SK-N-SH (cell line): ENCODE measurements at regions of chr11 and their contacts with region 1.

Region 1: GRCh38 chr11:62394825-62395538 is 23.9 kb upstream of the SCGB1A1 start:
- DNase-seq: peak; percentile 89
- H3K4me3 ChIP-seq: peak overlapping the region; percentile 28 to 35
- H3K27ac ChIP-seq: peak overlapping the region; percentile 6 to 93; a peak in 3 of 4 replicates
- H3K4me1 ChIP-seq: peaks cover 18 to 39% of the 10 kb centered on the region in 2 experiments; a peak in 3 of 4 replicates
- H3K27me3 ChIP-seq: no peaks in the 10 kb centered on the region
- CTCF ChIP-seq: peak; percentile 78
- EP300 ChIP-seq: peak in 1 of 2 experiments; percentile 56; a peak in 2 of 4 replicates
- RAD21 ChIP-seq: peak; percentile 93

Region 2: DNA sequence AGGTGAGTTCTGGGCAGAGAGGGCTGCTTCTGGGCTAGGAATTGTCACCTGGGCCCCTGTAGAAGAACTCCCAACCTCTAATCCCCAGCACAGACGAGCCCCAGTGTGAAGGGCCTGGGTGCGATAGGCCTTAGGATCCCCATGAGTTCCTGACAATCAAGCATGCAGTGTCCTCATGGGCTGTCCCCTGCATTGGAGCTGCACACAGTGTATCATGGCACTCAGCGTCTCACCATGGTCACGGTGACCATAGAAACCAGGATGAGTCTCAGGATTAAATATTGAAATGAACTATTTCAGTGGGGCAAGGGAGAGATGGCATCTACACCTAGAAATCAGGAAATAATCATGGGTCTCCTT is 186.2 kb before region 1 on chr11:
- CTCF ChIA-PET with region 1: no interaction called
- POLR2A ChIA-PET with region 1: no interaction called
- DNase-seq: no peak
- H3K4me3 ChIP-seq: no peak overlapping the region
- H3K27ac ChIP-seq: no peak overlapping the region
- H3K4me1 ChIP-seq: no peaks in the 10 kb centered on the region
- H3K27me3 ChIP-seq: peaks cover 18% of the 10 kb centered on the region
- CTCF ChIP-seq: no peak
- EP300 ChIP-seq: no peak
- RAD21 ChIP-seq: no peak

Region 3: DNA sequence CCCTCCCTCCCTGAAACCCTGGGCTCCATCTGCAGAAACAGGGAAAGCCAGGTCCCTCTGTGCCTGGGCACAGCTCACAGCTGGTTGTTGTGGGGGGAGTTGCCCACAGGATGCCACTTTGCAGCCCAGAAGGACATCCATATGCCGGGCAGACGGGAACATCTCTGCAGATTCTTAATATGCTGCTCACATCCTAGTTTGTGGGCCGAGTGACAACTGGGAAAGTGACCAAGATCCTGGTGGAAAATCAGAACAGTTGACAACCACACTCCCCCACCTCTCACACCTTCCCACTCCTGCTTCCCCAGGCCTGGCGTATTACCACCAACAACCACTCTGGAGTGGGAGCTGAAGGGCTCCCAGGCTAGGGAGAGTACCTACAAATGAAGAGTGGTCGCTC is 16.5 kb after region 1 on chr11:
- CTCF ChIA-PET with region 1: interaction called, 13 read pairs
- POLR2A ChIA-PET with region 1: no interaction called
- DNase-seq: no peak
- H3K4me3 ChIP-seq: no peak overlapping the region
- H3K27ac ChIP-seq: no peak overlapping the region; a peak in 1 of 4 replicates
- H3K4me1 ChIP-seq: peaks cover 0 to 22% of the 10 kb centered on the region in 2 experiments; a peak in 1 of 4 replicates
- H3K27me3 ChIP-seq: no peaks in the 10 kb centered on the region
- CTCF ChIP-seq: no peak
- EP300 ChIP-seq: no peak
- RAD21 ChIP-seq: no peak

Region 4: GRCh38 chr11:62444236-62444833 is 49.4 kb after region 1 on chr11:
- CTCF ChIA-PET with region 1: interaction called, 14 read pairs
- POLR2A ChIA-PET with region 1: no interaction called
- DNase-seq: peak; percentile 92
- H3K4me3 ChIP-seq: peak overlapping the region; percentile 55 to 69
- H3K27ac ChIP-seq: peak overlapping the region; percentile 83 to 91
- H3K4me1 ChIP-seq: peaks cover 19 to 22% of the 10 kb centered on the region in 2 experiments
- H3K27me3 ChIP-seq: no peaks in the 10 kb centered on the region
- CTCF ChIP-seq: no peak
- EP300 ChIP-seq: no peak
- RAD21 ChIP-seq: no peak

Region 5: GRCh38 chr11:62556108-62556871 is 161.3 kb after region 1 on chr11:
- CTCF ChIA-PET with region 1: interaction called, 51 read pairs
- POLR2A ChIA-PET with region 1: interaction called, 5 read pairs
- DNase-seq: peak; percentile 90
- H3K4me3 ChIP-seq: no peak overlapping the region; a peak in 1 of 4 replicates
- H3K27ac ChIP-seq: peak overlapping the region; percentile 85 to 97
- H3K4me1 ChIP-seq: peaks cover 40 to 79% of the 10 kb centered on the region in 2 experiments
- H3K27me3 ChIP-seq: no peaks in the 10 kb centered on the region
- CTCF ChIP-seq: no peak
- EP300 ChIP-seq: peak in 1 of 2 experiments; percentile 42; a peak in 1 of 4 replicates
- RAD21 ChIP-seq: no peak

Region 6: GRCh38 chr11:62612366-62613290 is 217.6 kb after region 1 on chr11 and contains the starts of genes EML3 and ROM1:
- CTCF ChIA-PET with region 1: interaction called, 10 read pairs
- POLR2A ChIA-PET with region 1: no interaction called
- DNase-seq: peak; percentile 97
- H3K4me3 ChIP-seq: peak within 1 kb of the TSS; percentile 71 to 81
- H3K27ac ChIP-seq: peak within 1 kb of the TSS; percentile 70 to 92
- H3K4me1 ChIP-seq: peaks cover 4 to 24% of the 10 kb centered on the region in 2 experiments; a peak in 2 of 4 replicates
- H3K27me3 ChIP-seq: no peaks in the 10 kb centered on the region
- CTCF ChIP-seq: peak; percentile 76
- EP300 ChIP-seq: no peak
- RAD21 ChIP-seq: no peak; the same call in 1 of the 2 replicates
- polyA plus RNA-seq, gene EML3: 43.0 and 47.8 TPM in 2 replicates
- polyA plus RNA-seq, gene ROM1: 7.3 and 7.9 TPM in 2 replicates

Region 7: GRCh38 chr11:62694455-62695167 is 299.6 kb after region 1 on chr11:
- CTCF ChIA-PET with region 1: interaction called, 10 read pairs
- POLR2A ChIA-PET with region 1: interaction called, 3 read pairs
- DNase-seq: peak; percentile 81
- H3K4me3 ChIP-seq: peak overlapping the region in 1 of 2 experiments; percentile 31; a peak in 1 of 4 replicates
- H3K27ac ChIP-seq: peak overlapping the region; percentile 23 to 27; a peak in 2 of 4 replicates
- H3K4me1 ChIP-seq: peaks cover 3 to 4% of the 10 kb centered on the region in 2 experiments; a peak in 3 of 4 replicates
- H3K27me3 ChIP-seq: no peaks in the 10 kb centered on the region
- CTCF ChIP-seq: peak; percentile 87
- EP300 ChIP-seq: no peak
- RAD21 ChIP-seq: peak; percentile 68